ENCODE measurements at regions of chr2 and their contacts with region 1.

Region 1: DNA sequence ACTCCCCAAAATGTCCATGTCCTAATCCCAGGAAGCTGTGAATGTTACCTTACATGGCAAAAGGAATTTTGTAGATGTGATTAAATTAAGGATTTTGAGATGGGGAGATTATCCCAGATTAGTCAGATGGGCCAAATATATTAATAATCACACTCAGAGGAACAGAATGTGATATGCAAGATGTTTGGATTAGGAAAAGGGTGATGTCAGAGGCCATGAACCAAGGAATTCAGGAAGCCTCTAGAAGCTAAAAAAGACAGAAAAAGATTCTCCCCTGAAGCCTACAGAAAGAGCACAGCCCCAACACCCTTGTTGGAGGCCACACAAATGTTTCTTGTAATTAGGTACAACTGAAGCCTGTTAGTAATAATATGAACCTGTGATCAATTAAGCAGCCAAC is 13.1 kb downstream of the TMEM131 start:
- DNase-seq: no peak
- ATAC-seq: no peak
- H3K4me3 ChIP-seq: no peak overlapping the region
- H3K4me3 Mint-ChIP-seq: no peak overlapping the region
- H3K27ac ChIP-seq: peak overlapping the region in 1 of 2 donors; percentile 20
- H3K27ac Mint-ChIP-seq: no peak overlapping the region
- H3K4me1 ChIP-seq: peaks cover 16 to 17% of the 10 kb centered on the region in 2 donors
- H3K4me1 Mint-ChIP-seq: peaks cover 58% of the 10 kb centered on the region
- H3K27me3 ChIP-seq: no peaks in the 10 kb centered on the region
- H3K27me3 Mint-ChIP-seq: no peaks in the 10 kb centered on the region
- CTCF ChIP-seq: no peak

Region 2: GRCh38 chr2:97713296-97714083 is 269.1 kb before region 1 on chr2 and contains the start of gene ZAP70:
- CTCF ChIA-PET with region 1: no interaction called
- POLR2A ChIA-PET with region 1: no interaction called
- intact Hi-C with region 1: no loop called
- DNase-seq: peak; percentile 41
- ATAC-seq: no peak
- H3K4me3 ChIP-seq: peak within 1 kb of the TSS in 2 of 5 experiments; percentile 5 to 8
- H3K4me3 Mint-ChIP-seq: no peak within 1 kb of the TSS
- H3K27ac ChIP-seq: peak within 1 kb of the TSS; percentile 1 to 72
- H3K27ac Mint-ChIP-seq: peak within 1 kb of the TSS; percentile 50
- H3K4me1 ChIP-seq: peaks cover 21 to 27% of the 10 kb centered on the region in 2 donors
- H3K4me1 Mint-ChIP-seq: peaks cover 27% of the 10 kb centered on the region
- H3K27me3 ChIP-seq: no peaks in the 10 kb centered on the region
- H3K27me3 Mint-ChIP-seq: peaks cover 5% of the 10 kb centered on the region
- CTCF ChIP-seq: no peak
- total RNA-seq, gene ZAP70: 3.4 and 4.4 TPM in 2 replicates

Region 3: DNA sequence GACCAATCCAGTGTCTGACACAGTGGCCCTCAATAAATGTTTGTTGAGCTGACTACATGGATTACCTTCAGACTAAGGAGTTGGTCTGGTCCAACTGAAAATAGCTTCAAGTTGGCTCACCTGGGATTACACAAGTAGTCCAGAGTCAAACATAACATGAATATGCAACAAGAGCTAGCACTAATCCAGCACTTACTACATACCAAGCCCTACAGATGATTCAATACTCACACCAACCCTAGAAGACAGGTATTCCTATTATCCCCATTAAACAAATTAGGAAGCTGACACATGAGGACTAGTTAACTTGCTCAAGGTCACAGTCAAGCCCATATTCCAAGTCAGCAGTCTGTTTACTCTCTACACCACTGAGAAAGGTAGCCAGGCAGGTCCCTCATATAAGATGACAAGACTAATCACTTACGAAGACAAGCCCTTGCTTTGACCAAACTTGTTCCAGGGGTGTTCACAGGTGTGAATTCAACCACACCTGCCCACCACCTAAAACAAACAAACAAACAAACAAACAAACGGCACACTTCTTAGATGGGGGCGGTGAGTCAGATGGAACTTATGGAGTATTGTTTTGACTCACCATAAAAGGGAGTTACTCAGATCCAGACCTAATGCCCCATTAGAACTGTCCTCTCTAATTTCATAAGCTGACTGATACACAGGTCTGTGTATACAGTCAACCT is 16.0 kb before region 1 on chr2:
- CTCF ChIA-PET with region 1: interaction called, 4 read pairs
- POLR2A ChIA-PET with region 1: no interaction called
- intact Hi-C with region 1: loop called (anchors 2 kb)
- DNase-seq: no peak
- ATAC-seq: peak; percentile 45
- H3K4me3 ChIP-seq: no peak overlapping the region
- H3K4me3 Mint-ChIP-seq: peak overlapping the region; percentile 26
- H3K27ac ChIP-seq: peak overlapping the region in 1 of 2 donors; percentile 57
- H3K27ac Mint-ChIP-seq: peak overlapping the region; percentile 71
- H3K4me1 ChIP-seq: peaks cover 54% of the 10 kb centered on the region in 2 donors
- H3K4me1 Mint-ChIP-seq: peaks cover 86% of the 10 kb centered on the region
- H3K27me3 ChIP-seq: no peaks in the 10 kb centered on the region
- H3K27me3 Mint-ChIP-seq: no peaks in the 10 kb centered on the region
- CTCF ChIP-seq: no peak